AG04450 (cell line): ENCODE measurements at regions of chr16 and their contacts with region 1.

Region 1: DNA sequence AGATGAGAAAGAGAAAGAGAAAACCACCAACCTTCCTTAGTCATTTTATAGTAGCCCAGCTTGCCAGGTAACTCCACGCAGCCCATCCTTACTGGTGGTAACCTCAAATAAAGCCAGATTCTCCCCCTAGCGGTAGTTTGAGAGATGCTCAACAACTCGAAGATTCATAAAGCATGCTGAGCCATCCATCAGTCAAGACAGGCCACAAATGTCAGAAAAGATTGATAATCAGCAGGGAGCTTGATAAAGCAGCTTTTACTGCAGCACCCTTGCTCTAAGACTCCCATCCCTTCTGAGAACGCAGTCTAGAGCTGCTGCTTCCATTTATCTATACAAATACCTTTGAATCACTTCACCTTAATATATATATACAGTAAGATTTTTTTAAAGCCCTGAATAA is 451.5 kb upstream of the HSBP1 start:
- DNase-seq: peak; percentile 7
- H3K4me3 ChIP-seq: no peak overlapping the region
- H3K27ac ChIP-seq: no peak overlapping the region
- H3K27me3 ChIP-seq: no peaks in the 10 kb centered on the region
- CTCF ChIP-seq: peak; percentile 81

Region 2: GRCh38 chr16:83247767-83248372 is 108.4 kb before region 1 on chr16:
- CTCF ChIA-PET with region 1: interaction called, 14 read pairs
- POLR2A ChIA-PET with region 1: no interaction called
- DNase-seq: no peak
- H3K4me3 ChIP-seq: no peak overlapping the region
- H3K27ac ChIP-seq: no peak overlapping the region
- H3K27me3 ChIP-seq: no peaks in the 10 kb centered on the region
- CTCF ChIP-seq: no peak

Region 3: GRCh38 chr16:83336630-83337029 is 19.6 kb before region 1 on chr16:
- CTCF ChIA-PET with region 1: interaction called, 15 read pairs
- POLR2A ChIA-PET with region 1: no interaction called
- DNase-seq: peak; percentile 1
- H3K4me3 ChIP-seq: no peak overlapping the region
- H3K27ac ChIP-seq: no peak overlapping the region
- H3K27me3 ChIP-seq: no peaks in the 10 kb centered on the region
- CTCF ChIP-seq: no peak